Heart left ventricle (tissue), 16 donors: ENCODE measurements at regions of chr4 and their contacts with region 1.

Region 1: GRCh38 chr4:7052923-7053715 is 9.9 kb downstream of the TADA2B start:
- DNase-seq: peak in 3 of 5 donors; percentile 55 to 71 (median 61)
- ATAC-seq: peak; percentile 49 to 74 (median 68)
- H3K4me3 ChIP-seq: no peak overlapping the region
- H3K27ac ChIP-seq: peak overlapping the region in 9 of 12 donors; percentile 2 to 74 (median 41)
- H3K4me1 ChIP-seq: peaks cover 0 to 49% (median 36%) of the 10 kb centered on the region in 12 donors
- H3K27me3 ChIP-seq: no peaks in the 10 kb centered on the region
- CTCF ChIP-seq: no peak
- POLR2A ChIP-seq: no peak

Region 2: DNA sequence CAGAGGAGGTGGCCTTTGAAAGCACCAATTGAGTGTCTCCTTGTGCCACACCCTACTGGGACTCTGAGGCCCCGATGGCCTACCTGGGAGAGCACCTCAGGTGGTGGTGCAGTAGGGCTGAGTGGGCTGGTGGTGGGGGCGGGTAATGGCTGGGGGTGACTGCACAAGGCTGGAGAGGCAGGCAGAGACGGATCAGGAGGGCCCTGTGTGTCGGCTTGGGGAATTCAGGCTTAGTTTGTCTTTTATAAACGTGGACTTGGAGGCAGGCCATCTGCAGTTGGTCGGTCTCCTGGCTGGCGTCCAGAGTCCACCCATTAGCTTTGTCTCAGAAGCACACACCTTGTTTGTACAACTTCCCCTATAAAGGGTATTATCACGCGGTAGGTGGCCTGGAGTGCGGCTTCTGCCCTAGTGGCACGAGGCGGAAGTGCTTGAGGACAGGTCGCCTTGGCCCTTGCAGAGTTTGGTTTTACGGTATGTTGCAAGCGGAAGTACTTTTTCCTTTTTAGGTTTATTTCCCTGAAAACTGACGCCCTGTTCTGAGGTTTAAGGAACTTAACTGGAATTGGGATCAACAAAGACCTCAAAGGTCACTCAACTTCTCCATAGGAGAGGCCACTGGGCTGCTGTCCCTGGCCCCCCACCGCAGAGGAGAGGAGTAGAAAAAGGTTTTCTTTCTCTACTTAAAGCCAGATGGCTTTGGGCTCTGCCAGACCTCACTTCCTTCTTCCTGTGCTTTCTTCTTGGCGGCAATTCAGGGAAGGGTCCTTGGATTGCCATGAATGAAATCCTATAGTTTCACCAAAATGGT is 135.5 kb before region 1 on chr4:
- intact Hi-C with region 1: loop called in 1 of 10 experiments (anchors 10 kb)
- DNase-seq: peak; percentile 46 to 86 (median 73)
- ATAC-seq: peak; percentile 54 to 84 (median 76)
- H3K4me3 ChIP-seq: peak overlapping the region in 1 of 12 donors; percentile 25
- H3K27ac ChIP-seq: peak overlapping the region in 8 of 12 donors; percentile 1 to 93 (median 28)
- H3K4me1 ChIP-seq: peaks cover 0 to 83% (median 25%) of the 10 kb centered on the region in 12 donors
- H3K27me3 ChIP-seq: no peaks in the 10 kb centered on the region
- CTCF ChIP-seq: peak in 9 of 12 donors; percentile 23 to 55 (median 37)
- POLR2A ChIP-seq: no peak